ENCODE measurements at regions of chr11 and their contacts with region 1.

Region 1: GRCh38 chr11:123707606-123708205 is 33.8 kb downstream of the ZNF202 start:
- DNase-seq: peak; percentile 75

Region 2: GRCh38 chr11:123630126-123630608 is 77.5 kb before region 1 on chr11:
- in situ Hi-C with region 1: loop called (anchors 10 kb)
- DNase-seq: no peak

Measured in KBM-7 (cell line).